ENCODE measurements at regions of chr16 and their contacts with region 1.

Region 1: DNA sequence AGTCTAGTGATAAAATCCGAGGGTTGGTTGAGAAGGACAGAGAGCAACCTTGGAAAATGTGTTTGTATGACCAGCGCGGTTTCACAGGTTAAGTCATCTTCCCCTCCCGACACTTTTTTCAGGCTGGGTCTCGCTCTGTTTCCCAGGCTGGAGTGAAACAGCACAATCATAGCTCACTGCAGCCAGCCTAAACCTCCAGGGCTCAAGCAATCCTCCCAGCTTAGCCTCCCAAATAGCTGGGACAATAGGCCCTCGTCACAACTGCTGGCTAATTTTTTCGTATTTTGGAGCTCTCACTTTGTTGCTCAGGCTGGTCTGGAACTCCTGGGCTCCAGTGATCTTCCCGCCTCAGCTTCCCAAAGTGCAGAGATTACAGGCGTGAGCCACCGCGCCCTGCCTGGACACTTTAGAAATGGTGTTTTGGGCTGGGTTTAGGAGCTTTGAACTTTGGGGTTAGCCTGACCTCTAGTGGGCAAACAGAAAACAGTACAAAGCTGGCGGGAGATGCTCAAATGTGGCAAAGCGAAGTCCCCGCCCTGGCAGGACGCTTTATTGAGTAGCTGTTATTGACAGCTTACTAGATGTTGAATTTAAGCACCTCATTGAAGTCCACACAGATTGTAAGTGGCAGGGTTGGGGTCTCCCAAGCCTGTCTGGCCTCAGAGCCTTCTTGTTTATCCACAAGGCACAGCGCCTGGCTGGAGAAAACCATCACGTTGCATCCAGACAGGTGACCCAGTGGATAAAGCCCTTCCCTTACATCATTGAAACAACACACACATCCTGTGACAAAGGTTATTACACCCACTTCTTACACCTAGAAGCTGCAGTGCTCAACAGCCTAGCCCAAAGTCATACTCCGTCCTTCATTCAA is 34.7 kb upstream of the RBBP6 start:
- DNase-seq: peak; percentile 50
- H3K4me3 Mint-ChIP-seq: no peak overlapping the region
- H3K27ac Mint-ChIP-seq: no peak overlapping the region
- H3K4me1 Mint-ChIP-seq: peaks cover 8% of the 10 kb centered on the region
- H3K27me3 Mint-ChIP-seq: peaks cover 8% of the 10 kb centered on the region

Region 2: GRCh38 chr16:24041826-24042631 is 462.7 kb before region 1 on chr16:
- intact Hi-C with region 1: loop called (anchors 1 kb)
- DNase-seq: peak; percentile 62
- H3K4me3 Mint-ChIP-seq: no peak overlapping the region
- H3K27ac Mint-ChIP-seq: no peak overlapping the region
- H3K4me1 Mint-ChIP-seq: peaks cover 8% of the 10 kb centered on the region
- H3K27me3 Mint-ChIP-seq: no peaks in the 10 kb centered on the region

Region 3: DNA sequence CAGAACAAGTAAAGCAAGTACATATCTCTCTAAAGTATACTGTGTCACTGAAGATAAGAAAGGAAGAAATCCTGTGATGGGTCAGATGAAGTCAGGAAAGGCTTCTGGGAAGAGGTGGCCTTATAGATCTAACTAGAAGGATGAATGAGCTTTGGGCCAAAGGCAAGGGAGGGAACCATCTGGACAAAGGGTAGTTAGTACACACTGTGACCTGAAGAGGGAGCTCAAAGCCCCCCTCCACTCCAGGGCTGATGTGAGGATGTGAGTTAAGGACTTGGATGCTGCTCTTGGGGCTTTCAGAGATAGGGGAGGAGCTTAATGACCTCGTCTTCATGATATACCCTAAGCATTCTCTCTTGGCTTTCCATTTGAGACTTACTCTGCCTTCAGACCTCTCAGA is 433.9 kb before region 1 on chr16:
- intact Hi-C with region 1: loop called (anchors 1 kb)
- DNase-seq: peak; percentile 6
- H3K4me3 Mint-ChIP-seq: no peak overlapping the region
- H3K27ac Mint-ChIP-seq: no peak overlapping the region
- H3K4me1 Mint-ChIP-seq: peaks cover 20% of the 10 kb centered on the region
- H3K27me3 Mint-ChIP-seq: no peaks in the 10 kb centered on the region

Region 4: GRCh38 chr16:24452724-24453123 is 52.0 kb before region 1 on chr16:
- intact Hi-C with region 1: no loop called
- DNase-seq: no peak
- H3K4me3 Mint-ChIP-seq: no peak overlapping the region
- H3K27ac Mint-ChIP-seq: no peak overlapping the region
- H3K4me1 Mint-ChIP-seq: no peaks in the 10 kb centered on the region
- H3K27me3 Mint-ChIP-seq: peaks cover 5% of the 10 kb centered on the region

Region 5: DNA sequence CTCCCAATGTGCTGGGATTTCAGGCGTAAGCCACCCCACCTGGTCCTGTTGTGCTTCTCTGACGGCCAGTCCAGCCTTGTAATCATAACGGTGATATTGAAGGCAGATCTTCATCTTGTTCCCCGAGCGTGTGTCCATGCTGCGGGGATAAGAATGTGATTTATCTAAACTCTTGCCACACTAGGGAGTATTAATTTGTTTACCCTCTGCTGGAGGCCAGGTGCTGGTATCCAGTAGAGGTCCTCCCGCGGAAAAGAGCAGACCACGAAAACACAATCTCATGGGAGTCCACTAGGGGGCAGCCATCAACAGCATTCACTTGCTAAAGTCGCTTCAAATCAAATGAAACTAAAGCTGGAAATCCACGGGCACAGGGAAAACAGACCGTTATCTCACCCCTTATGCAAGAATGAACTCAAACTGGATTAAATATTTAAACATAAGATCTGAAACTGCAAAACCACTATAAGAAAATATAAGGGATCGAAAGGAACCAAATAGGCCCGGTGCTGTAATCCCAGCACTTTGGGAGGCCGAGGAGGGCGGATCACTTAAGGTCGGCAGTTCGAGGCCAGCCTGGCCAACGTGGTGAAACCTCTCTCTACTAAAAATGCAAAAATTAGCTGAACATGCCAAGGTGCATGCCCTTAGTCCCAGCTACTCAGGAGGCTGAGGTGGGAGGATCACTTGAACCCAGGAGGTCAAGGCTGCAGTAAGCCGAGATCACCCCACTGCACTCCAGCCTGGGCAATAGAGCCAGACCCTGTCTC is 12.4 kb after region 1 on chr16:
- intact Hi-C with region 1: no loop called
- DNase-seq: peak; percentile 62
- H3K4me3 Mint-ChIP-seq: no peak overlapping the region
- H3K27ac Mint-ChIP-seq: no peak overlapping the region
- H3K4me1 Mint-ChIP-seq: peaks cover 16% of the 10 kb centered on the region
- H3K27me3 Mint-ChIP-seq: peaks cover 9% of the 10 kb centered on the region

Measured in activated T-helper 1 cell treated with anti-CD3 and anti-CD28 coated beads, Interleukin-12 subunit alpha, Interleukin-12 subunit beta, Interleukin-2, Interleukin-4 antibody, amounts not matched to agents 30 ng/mL and 10 ng/mL and 1 ng/mL, durations not matched to agents 14 hours and 24 hours and 36 hours (primary cell).